Activated CD8-positive, alpha-beta memory T cell treated with anti-CD3 and anti-CD28 coated beads, Interleukin-2, amount 10 ng/mL, durations not matched to agents 7 days and 5 days (primary cell): ENCODE measurements at regions of chr22 and their contacts with region 1.

Region 1: DNA sequence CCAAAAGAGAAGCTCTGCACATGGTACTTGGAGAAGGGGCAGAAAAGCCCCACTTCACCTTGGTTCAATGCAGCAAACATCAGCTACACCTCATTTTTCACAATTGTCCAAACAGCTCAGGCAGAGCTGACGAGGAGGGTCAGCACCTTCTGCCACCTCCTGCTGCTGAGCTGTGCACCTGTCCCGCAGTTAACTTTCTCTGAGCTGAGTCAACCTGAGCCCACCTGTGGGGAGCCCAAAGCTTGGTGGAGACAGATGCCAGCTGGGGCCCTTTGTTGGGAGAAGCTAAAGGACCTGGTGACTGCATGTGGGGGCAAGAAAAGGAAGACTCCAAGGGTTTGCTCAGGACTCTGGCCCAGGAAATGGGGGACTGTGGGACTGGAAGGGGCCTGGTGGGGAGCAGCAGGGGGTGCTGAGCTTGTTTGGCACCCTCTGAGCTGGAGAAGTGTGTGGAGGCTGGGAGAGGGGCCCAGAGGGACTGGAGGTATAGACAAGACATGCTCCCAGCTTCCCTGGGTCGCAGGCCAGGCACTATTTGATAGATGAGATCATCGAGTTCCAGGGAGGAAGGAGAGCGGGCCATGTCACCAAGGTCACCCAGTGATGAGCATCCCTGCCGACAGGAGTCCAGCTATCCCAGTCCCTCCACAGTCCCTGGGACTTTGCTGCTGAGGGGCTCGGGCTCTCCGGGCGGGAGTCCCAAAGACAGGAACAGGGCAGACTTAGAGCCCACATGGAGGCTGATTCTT is 53.5 kb downstream of the KCNJ4 start:
- DNase-seq: no peak
- ATAC-seq: no peak
- H3K4me3 Mint-ChIP-seq: no peak overlapping the region
- H3K27ac Mint-ChIP-seq: no peak overlapping the region
- H3K4me1 Mint-ChIP-seq: peaks cover 13% of the 10 kb centered on the region
- H3K27me3 Mint-ChIP-seq: peaks cover 23% of the 10 kb centered on the region

Region 2: DNA sequence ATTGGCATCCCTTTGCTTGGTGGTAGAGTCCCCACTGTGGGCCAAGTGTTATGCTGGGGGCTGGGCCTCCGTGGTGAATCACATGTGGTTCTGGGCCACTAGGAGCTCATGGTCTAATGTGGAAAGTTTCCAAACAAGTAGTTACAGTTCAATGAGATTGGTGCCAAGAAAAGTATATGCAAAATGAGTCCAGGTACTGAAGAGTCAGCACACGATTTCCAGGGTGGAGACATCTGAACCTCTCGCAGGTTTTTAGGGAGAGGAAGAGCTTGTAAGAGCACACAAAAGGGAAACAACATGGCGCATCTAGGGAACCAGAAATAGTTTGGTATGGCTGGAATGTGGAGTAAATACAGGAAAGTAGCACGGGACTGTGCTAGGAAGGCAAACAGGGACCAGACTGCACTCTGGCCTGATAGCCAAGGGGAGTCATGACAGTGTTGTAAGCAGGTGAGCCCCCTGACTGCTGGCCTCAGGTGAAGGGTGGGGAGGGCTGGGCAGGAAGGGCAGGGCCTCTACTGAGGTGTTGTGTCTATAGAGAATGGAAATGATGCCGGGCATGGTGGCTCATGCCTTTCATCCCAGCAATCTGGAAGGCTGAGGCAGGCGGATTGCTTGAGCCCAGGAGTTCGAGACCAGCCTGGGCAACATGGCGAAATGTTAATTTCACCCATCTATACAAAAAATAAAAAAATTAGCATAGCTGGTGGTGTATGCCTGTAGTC is 435.4 kb before region 1 on chr22:
- CTCF ChIA-PET with region 1: no interaction called
- DNase-seq: no peak
- ATAC-seq: no peak
- H3K4me3 Mint-ChIP-seq: no peak overlapping the region
- H3K27ac Mint-ChIP-seq: no peak overlapping the region
- H3K4me1 Mint-ChIP-seq: peaks cover 1% of the 10 kb centered on the region
- H3K27me3 Mint-ChIP-seq: no peaks in the 10 kb centered on the region

Region 3: DNA sequence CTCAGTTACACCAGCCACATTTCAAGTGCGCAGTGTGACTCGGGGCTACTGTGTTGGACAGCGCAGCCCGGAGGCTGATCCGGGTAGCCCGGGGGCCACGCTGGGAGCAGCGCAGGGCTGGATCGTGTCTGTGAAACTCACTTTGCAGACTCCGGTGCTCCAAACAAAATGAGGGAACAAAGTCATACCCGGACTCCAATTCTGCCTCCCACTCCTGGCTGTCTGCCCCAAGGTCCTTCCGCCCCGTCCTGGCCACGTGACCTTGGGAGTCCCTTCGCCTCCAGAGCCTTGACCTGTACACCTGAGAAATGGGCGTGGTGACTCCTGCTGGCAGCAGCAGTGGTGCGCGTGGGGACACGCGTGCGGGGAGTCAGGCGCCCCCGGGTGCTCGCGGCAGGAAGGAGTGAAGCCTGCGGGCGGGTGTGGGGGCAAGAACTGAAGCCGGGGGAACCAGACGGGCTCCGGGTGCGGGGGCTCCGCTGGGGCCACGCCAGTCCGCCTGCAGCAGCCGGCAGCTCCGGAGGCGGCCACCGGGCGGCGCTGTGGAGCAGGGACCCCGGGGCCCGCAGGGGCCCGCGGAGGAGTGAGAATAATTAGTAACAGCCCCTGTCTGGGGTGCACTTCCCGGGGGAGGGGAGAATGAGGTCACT is 11.1 kb after region 1 on chr22:
- CTCF ChIA-PET with region 1: interaction called, 12 read pairs
- DNase-seq: peak; percentile 48
- ATAC-seq: peak; percentile 79
- H3K4me3 Mint-ChIP-seq: no peak overlapping the region
- H3K27ac Mint-ChIP-seq: no peak overlapping the region
- H3K4me1 Mint-ChIP-seq: peaks cover 4% of the 10 kb centered on the region
- H3K27me3 Mint-ChIP-seq: no peaks in the 10 kb centered on the region

Region 4: DNA sequence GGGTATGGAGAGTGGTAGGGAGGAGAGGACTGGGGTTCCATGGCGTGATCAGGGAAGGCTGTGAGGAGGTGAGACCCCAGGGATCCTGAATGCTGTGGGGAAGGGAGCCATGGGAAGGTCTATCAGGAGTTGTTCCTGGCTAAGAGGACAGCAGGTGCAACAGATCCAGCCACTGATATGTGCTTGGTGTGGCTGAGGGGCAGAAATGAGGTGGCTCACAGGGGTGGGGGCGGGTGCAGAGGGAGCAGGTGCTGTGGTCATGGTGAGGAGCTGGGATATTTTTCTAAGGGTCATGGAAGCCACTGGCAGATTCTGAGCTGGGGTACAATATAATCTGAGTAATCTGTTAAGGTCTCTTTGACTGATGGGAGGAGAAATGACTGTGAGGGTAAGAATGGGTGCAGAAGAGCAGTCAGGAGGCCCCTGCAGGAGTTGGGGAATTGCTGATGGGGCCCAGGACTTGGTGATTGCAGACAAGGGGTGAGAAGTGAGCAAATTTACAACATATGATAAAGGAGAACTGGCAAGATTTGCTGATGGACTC is 199.8 kb after region 1 on chr22:
- CTCF ChIA-PET with region 1: no interaction called
- DNase-seq: no peak
- ATAC-seq: no peak
- H3K4me3 Mint-ChIP-seq: no peak overlapping the region
- H3K27ac Mint-ChIP-seq: no peak overlapping the region
- H3K4me1 Mint-ChIP-seq: no peaks in the 10 kb centered on the region
- H3K27me3 Mint-ChIP-seq: peaks cover 10% of the 10 kb centered on the region